ENCODE measurements at regions of chr6 and their contacts with region 1.

Region 1: GRCh38 chr6:85642774-85643536 is at the start of gene SYNCRIP:
- DNase-seq: peak; percentile 98
- H3K4me3 Mint-ChIP-seq: peak within 1 kb of the TSS; percentile 92
- H3K27ac Mint-ChIP-seq: peak within 1 kb of the TSS; percentile 99
- H3K4me1 Mint-ChIP-seq: peaks cover 47% of the 10 kb centered on the region
- H3K27me3 Mint-ChIP-seq: peaks cover 3% of the 10 kb centered on the region
- total RNA-seq, gene SYNCRIP: 207 and 217 TPM in 2 replicates

Region 2: GRCh38 chr6:85449818-85450759 is 192.9 kb before region 1 on chr6 and contains the start of gene NT5E:
- intact Hi-C with region 1: loop called (anchors 1 kb)
- DNase-seq: peak; percentile 37
- H3K4me3 Mint-ChIP-seq: peak within 1 kb of the TSS; percentile 98
- H3K27ac Mint-ChIP-seq: peak within 1 kb of the TSS; percentile 89
- H3K4me1 Mint-ChIP-seq: peaks cover 66% of the 10 kb centered on the region
- H3K27me3 Mint-ChIP-seq: peaks cover 31% of the 10 kb centered on the region
- total RNA-seq, gene NT5E: 12.5 and 15.2 TPM in 2 replicates

Region 3: DNA sequence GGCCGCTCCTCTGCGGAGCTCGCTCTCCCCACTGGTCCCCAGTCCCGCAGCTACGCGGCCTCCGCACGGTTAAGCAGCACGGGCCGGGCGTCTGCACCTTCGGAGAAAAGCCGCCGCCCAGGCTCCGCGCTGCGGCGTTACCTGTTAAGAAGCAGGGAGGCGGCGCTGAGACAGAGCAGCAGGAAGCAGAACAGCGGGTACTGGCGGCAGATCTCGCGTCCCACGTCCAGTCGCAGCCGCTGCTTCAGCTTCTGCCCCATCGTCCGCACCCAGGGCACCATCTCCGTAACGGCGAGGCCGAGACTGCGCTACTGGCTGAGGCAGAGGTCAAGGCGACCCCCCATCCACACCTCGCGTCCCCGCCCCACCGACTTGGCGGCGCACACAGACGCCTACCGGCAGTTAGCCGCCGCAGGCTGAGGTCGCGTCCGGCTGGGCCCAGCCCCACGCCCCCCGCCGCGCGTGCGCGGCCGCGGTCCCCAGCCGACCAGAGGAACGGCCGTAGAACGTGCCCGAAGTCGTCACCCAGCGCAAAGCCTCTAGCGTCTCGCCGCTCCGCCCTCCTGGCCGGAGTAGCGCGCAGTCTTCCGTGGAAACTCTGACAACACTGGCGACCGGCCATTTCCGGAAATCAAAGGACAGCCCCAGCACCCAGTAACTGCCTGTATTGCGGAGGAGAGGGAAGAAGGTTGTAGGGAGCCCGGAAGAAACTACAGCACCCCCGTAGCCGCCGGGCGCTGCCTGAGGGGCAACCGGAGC is 49.3 kb before region 1 on chr6 and contains the start of gene SNX14:
- intact Hi-C with region 1: loop called (anchors 1 kb)
- DNase-seq: peak; percentile 74
- H3K4me3 Mint-ChIP-seq: peak within 1 kb of the TSS; percentile 94
- H3K27ac Mint-ChIP-seq: peak within 1 kb of the TSS; percentile 93
- H3K4me1 Mint-ChIP-seq: peaks cover 14% of the 10 kb centered on the region
- H3K27me3 Mint-ChIP-seq: no peaks in the 10 kb centered on the region
- total RNA-seq, gene SNX14: 49.5 and 51.0 TPM in 2 replicates

Region 4: GRCh38 chr6:85612690-85613474 is 30.1 kb before region 1 on chr6:
- intact Hi-C with region 1: loop called (anchors 2 kb)
- DNase-seq: no peak
- H3K4me3 Mint-ChIP-seq: no peak overlapping the region
- H3K27ac Mint-ChIP-seq: no peak overlapping the region
- H3K4me1 Mint-ChIP-seq: peaks cover 12% of the 10 kb centered on the region
- H3K27me3 Mint-ChIP-seq: no peaks in the 10 kb centered on the region

Region 5: DNA sequence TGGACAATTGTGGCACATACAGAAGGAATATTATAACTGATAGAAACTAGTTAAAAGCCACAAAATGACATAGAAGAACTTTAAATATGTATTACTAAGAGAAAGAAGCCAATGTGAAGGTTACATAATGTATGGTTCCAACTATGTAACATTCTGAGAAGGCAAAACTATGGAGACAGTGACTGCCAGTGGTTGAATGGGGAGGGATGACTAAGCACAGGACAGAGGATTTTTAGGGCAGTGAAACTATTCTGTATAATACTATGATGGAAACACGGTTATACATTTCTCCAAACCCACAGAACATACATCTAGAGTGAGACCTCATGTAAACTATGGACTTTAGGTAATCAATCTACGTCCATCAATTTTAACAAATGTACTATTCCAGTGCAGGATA is 22.6 kb before region 1 on chr6:
- intact Hi-C with region 1: loop called (anchors 2 kb)
- DNase-seq: no peak
- H3K4me3 Mint-ChIP-seq: no peak overlapping the region
- H3K27ac Mint-ChIP-seq: peak overlapping the region; percentile 15
- H3K4me1 Mint-ChIP-seq: peaks cover 32% of the 10 kb centered on the region
- H3K27me3 Mint-ChIP-seq: no peaks in the 10 kb centered on the region

Region 6: DNA sequence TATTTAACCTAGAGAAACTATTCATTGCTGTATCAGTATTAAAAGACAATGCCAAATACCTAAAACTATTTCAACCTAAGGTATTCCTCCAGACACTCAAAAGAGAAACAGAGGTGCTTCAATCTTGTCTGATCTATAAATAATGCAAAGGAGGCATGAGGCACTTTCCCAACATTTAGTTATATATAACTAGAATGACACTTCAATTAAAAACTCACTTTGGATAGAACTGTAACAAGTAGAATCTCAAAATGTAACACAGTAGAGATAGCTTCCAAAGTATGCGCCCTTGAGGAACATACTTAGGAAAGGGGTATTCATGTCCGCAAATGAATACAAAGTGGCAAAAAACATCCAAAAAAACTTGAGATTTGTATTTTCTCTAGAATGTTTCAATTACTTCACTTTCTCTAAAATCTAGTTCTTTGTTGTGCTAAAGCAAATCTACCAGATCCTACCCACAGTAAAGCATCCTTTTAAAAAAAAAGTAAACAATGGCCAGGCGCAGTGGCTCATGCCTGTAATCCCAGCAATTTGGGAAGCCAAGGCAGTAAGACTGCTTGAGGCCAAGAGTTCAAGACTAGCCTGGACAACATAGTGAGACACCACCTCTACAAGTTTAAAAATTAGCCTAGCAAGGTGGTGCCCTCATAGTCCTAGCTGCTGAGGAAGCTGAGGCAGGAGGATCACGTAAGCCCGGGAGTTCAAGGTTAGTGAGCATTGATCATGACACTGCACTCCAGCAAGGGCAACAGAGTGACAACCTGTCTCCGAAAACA is 10.6 kb before region 1 on chr6:
- intact Hi-C with region 1: no loop called
- DNase-seq: no peak
- H3K4me3 Mint-ChIP-seq: no peak overlapping the region
- H3K27ac Mint-ChIP-seq: no peak overlapping the region
- H3K4me1 Mint-ChIP-seq: peaks cover 53% of the 10 kb centered on the region
- H3K27me3 Mint-ChIP-seq: no peaks in the 10 kb centered on the region

Region 7: DNA sequence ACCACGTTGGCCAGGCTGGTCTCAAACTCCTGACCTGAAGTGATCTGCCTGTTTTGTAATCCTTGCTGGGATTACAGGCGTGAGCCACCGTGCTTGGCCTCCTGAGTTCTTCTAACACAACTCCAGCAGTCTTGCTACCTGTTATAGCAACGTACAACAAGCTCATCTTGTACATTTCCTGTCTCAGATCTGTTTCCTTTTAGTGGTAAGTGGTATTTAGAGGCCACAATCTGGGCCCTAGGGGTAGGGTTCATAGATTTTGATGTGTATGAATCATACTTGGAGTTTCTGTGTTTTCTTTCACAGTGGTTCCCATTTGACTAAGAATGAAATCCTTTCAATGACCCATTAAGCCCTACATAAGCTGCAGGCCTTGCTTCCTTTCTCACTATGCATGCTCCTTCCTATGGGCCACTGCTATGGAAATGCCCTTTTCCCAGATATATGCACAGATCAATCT is 26.8 kb after region 1 on chr6:
- intact Hi-C with region 1: loop called (anchors 1 kb)
- DNase-seq: peak; percentile 58
- H3K4me3 Mint-ChIP-seq: peak overlapping the region; percentile 78
- H3K27ac Mint-ChIP-seq: peak overlapping the region; percentile 74
- H3K4me1 Mint-ChIP-seq: peaks cover 56% of the 10 kb centered on the region
- H3K27me3 Mint-ChIP-seq: no peaks in the 10 kb centered on the region

Region 8: GRCh38 chr6:85678602-85679444 is 35.9 kb after region 1 on chr6:
- intact Hi-C with region 1: loop called (anchors 1 kb)
- DNase-seq: peak; percentile 98
- H3K4me3 Mint-ChIP-seq: peak overlapping the region; percentile 100
- H3K27ac Mint-ChIP-seq: peak overlapping the region; percentile 92
- H3K4me1 Mint-ChIP-seq: peaks cover 47% of the 10 kb centered on the region
- H3K27me3 Mint-ChIP-seq: no peaks in the 10 kb centered on the region

Region 9: DNA sequence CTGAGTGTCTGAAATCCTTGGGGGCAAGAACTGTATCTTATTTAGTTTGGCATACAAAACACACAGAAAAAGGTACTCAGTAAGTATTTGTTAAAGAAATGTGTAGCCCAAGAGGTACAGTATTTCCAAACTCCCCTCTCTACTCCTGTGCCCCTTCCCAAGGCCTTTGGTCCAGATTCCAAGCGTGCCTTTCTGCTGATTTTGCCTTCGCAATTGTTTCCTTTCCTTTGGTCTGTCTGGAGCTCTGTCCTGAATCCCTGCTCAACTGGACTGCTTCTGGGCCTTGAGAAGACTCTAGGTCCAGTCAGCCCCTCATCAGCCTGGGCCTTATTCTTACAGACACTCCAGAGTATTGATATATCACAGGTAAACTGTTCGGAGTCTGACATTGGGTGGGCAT is 121.9 kb after region 1 on chr6:
- intact Hi-C with region 1: no loop called
- DNase-seq: no peak
- H3K4me3 Mint-ChIP-seq: no peak overlapping the region
- H3K27ac Mint-ChIP-seq: no peak overlapping the region
- H3K4me1 Mint-ChIP-seq: no peaks in the 10 kb centered on the region
- H3K27me3 Mint-ChIP-seq: peaks cover 14% of the 10 kb centered on the region